ENCODE measurements at regions of chr4 and their contacts with region 1.

Region 1: DNA sequence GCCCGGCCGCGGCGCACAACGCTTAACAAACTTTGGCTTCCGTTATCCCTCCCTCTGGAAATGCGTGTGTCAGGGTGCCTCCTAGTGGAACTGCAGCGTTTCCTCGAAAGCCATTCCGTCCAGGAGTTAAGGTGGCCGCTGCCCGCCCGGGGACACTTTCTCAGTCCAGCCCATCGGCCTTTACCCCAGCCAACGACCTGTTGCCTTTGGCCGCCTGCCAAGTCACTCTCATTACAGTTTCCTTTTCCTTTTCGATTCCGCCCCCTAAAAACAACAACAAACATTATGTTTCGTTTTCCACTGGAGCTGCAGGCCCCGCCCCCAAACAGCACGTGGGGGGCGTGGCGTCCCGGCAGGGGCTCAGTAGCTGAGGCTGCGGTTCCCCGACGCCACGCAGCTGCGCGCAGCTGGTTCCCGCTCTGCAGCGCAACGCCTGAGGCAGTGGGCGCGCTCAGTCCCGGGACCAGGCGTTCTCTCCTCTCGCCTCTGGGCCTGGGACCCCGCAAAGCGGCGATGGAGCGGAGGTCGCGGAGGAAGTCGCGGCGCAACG is at the start of gene HERC5:
- DNase-seq: peak; percentile 93 to 95 (median 95)
- ATAC-seq: peak; percentile 94 to 97 (median 96)
- H3K4me3 ChIP-seq: peak within 1 kb of the TSS; percentile 52 to 92 (median 73)
- H3K27ac ChIP-seq: peak within 1 kb of the TSS; percentile 33 to 85 (median 72)
- H3K4me1 ChIP-seq: peaks cover 0 to 25% (median 5%) of the 10 kb centered on the region in 12 donors
- H3K27me3 ChIP-seq: no peaks in the 10 kb centered on the region
- CTCF ChIP-seq: peak; percentile 41 to 88 (median 72)
- POLR2A ChIP-seq: no peak
- total RNA-seq, gene HERC5: 0.88 to 5.5 (median 2.3) TPM

Region 2: DNA sequence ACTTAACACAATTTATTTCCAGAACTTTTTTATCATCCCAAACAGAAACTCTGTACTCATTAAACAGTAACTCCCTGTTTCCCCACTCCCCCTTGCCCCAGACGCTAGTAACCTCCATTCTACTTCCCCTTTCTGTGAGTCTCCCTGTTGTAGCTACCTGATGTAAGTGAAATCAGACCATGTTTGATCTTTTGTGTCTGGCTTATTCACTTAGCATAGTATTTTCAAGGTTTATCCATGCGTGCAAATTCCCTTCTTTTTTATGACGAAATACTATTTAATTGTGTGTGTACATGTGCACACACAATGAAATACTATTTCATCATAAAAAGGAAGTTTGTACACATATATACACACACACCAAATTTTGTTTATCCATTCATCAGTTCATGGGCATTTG is 444.2 kb before region 1 on chr4:
- intact Hi-C with region 1: loop called in 1 of 10 experiments (anchors 5 kb)
- DNase-seq: no peak
- ATAC-seq: no peak
- H3K4me3 ChIP-seq: no peak overlapping the region
- H3K27ac ChIP-seq: peak overlapping the region in 1 of 12 donors; percentile 46
- H3K4me1 ChIP-seq: peaks cover 0 to 69% (median 53%) of the 10 kb centered on the region in 12 donors
- H3K27me3 ChIP-seq: no peaks in the 10 kb centered on the region
- CTCF ChIP-seq: no peak
- POLR2A ChIP-seq: no peak

Region 3: DNA sequence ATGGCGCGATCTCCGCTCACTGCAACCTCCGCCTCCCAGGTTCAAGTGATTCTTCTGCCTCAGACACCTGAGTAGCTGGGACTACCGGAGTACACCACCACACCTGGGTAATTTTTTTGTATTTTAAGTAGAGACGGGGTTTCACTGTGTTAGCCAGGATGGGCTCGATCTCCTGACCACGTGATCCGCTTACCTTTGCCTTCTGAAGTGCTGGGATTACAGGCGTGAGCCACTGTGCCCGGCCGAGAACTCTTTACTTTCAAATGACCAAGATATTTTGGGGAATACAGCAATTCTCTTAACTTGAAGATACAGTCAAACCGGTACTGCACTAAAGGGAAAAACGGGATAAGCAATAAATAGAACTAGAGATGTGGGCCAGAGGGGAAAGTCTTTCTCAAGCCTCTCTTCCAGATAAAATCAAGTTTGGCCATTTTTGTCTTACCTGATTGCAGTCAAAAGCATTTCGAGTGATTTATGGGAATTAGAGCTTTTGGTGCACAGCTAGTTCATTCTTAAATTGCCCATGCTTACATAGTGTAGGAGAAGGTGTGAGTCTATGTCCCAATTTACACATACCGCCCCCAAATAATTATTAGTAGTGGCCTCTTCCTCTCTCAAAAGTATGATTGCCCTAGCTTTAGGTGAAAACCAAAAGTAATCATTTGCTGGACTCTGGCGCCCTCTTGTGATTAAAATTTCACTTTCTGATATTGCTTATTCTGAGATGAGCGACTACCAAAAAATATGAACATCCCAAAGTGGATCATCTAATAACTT is 245.2 kb before region 1 on chr4:
- intact Hi-C with region 1: loop called in 3 of 10 experiments (anchors 5 kb)
- DNase-seq: peak in 2 of 5 donors; percentile 29 to 33
- ATAC-seq: peak in 3 of 4 donors; percentile 55 to 63 (median 62)
- H3K4me3 ChIP-seq: no peak overlapping the region
- H3K27ac ChIP-seq: no peak overlapping the region
- H3K4me1 ChIP-seq: peaks cover 0 to 3% (median 0%) of the 10 kb centered on the region in 12 donors
- H3K27me3 ChIP-seq: no peaks in the 10 kb centered on the region
- CTCF ChIP-seq: peak; percentile 62 to 86 (median 74)
- POLR2A ChIP-seq: no peak

Region 4: DNA sequence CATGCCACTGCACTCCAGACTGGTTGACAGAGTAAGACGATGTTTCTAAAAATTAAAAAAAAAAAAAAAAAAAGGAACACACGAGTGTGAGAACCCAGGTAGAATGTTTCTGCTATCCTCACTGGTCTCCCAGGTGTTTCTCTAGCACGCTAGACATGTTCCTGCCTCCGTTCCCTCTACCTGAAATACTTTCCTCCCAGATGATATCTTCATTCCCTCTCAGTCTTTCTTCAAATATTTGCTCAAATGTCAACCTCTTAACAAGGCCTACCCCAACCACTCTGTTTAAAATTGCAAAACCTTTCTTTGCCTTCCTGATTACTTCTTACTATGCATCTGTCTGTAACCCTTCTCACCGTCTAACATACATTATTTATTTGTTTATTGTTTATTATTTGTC is 238.9 kb before region 1 on chr4:
- intact Hi-C with region 1: loop called (anchors 2 to 5 kb)
- DNase-seq: no peak
- ATAC-seq: no peak
- H3K4me3 ChIP-seq: no peak overlapping the region
- H3K27ac ChIP-seq: no peak overlapping the region
- H3K4me1 ChIP-seq: peaks cover 0 to 4% (median 0%) of the 10 kb centered on the region in 12 donors
- H3K27me3 ChIP-seq: no peaks in the 10 kb centered on the region
- CTCF ChIP-seq: no peak
- POLR2A ChIP-seq: no peak

Region 5: GRCh38 chr4:88225232-88226105 is 231.4 kb before region 1 on chr4:
- intact Hi-C with region 1: loop called in 3 of 10 experiments (anchors 2 to 5 kb)
- DNase-seq: no peak
- ATAC-seq: peak in 3 of 4 donors; percentile 37 to 51 (median 50)
- H3K4me3 ChIP-seq: no peak overlapping the region
- H3K27ac ChIP-seq: peak overlapping the region in 2 of 12 donors; percentile 26 to 35
- H3K4me1 ChIP-seq: peaks cover 0 to 20% (median 5%) of the 10 kb centered on the region in 12 donors
- H3K27me3 ChIP-seq: no peaks in the 10 kb centered on the region
- CTCF ChIP-seq: no peak
- POLR2A ChIP-seq: no peak

Region 6: DNA sequence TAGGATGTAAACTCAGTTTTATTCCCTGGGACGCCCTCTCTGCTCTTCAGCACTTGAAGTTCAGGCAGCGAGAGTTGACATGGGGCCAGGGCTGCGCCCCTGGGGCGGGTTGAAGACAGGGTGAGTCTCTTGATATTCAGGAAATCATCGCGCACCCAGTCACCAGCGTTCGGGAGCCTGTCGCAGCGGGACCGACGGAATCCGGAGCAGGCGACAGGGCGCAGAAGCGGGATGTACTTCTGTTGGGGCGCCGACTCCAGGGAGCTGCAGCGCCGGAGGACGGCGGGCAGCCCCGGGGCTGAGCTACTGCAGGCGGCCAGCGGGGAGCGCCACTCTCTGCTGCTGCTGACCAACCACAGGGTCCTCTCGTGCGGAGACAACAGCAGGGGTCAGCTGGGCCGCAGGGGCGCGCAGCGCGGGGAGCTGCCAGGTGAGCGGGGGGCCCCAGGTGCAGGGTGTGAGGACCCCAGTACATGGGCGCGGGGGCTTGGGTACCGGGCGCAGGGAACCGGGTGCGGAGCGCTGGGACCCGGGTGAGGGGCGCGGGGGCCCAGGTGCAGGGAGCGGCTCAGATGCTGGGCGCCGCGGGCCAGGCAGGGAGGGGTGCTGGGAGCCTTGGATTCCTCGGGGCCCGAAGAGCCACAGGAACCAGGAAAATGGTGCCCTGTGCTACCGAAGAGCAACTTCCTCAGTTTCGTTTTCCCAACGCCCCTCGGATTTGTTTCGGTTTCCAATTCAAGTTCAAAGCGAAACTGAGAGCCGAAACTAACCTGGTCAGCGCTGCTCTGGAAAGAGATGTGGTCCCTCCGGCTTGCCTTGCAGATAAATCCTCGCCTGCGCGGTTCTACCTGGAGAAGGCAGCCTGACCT is 77.9 kb before region 1 on chr4 and contains the start of gene HERC6:
- intact Hi-C with region 1: loop called in 8 of 10 experiments (anchors 1 to 10 kb)
- DNase-seq: peak; percentile 81 to 89 (median 83)
- ATAC-seq: peak; percentile 91 to 98 (median 97)
- H3K4me3 ChIP-seq: peak within 1 kb of the TSS; percentile 46 to 100 (median 90)
- H3K27ac ChIP-seq: peak within 1 kb of the TSS; percentile 91 to 100 (median 97)
- H3K4me1 ChIP-seq: peaks cover 0 to 17% (median 0%) of the 10 kb centered on the region in 12 donors
- H3K27me3 ChIP-seq: no peaks in the 10 kb centered on the region
- CTCF ChIP-seq: peak; percentile 53 to 89 (median 70)
- POLR2A ChIP-seq: no peak
- total RNA-seq, gene HERC6: 6.1 to 22.0 (median 15.6) TPM

Region 7: DNA sequence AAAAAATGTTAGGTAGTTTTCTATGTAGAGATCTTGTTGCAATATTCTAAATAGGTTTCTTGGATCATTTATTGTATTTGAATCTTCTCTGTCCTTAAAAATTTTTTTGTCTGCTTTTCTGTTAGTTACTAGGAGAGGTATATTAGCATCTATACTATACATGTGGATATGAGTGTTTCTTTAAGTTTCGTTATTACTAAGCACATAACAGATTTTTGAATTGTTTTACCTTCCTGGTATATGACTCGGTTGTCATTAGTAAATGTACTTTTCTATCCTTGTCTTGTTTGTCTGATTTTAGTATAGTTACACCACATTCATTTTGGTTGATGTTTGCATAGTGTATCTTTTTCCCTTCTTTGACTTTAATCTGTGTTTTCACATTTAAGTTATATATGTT is 46.5 kb after region 1 on chr4:
- intact Hi-C with region 1: no loop called
- DNase-seq: no peak
- ATAC-seq: no peak
- H3K4me3 ChIP-seq: no peak overlapping the region
- H3K27ac ChIP-seq: no peak overlapping the region
- H3K4me1 ChIP-seq: no peaks in the 10 kb centered on the region
- H3K27me3 ChIP-seq: no peaks in the 10 kb centered on the region
- CTCF ChIP-seq: no peak
- POLR2A ChIP-seq: no peak

Region 8: DNA sequence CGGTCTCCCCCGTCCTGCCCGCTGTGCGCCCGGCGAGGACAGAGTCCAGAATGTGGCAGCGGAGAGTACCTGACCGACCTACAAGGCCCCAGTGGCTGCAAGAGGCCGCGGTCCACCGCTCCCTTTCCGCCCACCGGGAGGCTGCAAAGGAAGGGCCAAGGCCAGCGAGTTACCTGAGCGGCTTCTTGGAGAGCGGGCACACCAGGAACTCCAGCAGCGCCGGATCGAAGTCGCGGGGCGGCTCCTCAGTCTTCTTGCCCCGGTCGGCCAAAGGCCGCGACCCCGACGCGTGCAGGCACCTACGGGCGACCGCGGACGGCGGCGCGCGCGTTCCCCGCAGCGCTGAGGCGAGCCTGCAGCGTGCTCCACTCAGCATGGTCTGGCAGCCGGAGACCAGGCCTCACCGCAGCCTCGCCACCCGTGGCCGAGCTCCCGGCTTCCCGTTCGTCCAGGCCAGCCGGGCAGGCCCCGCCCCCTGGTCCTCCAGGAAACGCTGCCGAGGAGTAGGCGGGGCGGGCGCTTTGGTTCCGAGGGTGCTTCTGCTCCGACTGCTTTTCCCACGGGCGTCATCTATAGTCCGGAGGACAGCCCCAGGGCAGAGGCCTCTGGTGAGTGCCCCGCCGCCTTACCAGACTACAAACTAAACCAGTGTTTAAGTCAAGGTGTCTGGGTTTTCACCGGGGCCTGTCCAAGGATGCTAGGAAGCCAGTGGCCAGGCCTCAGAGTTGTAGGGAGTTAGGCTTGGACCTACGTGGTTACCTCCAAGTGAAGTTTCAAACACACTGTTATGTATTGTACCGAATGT is 66.7 kb after region 1 on chr4 and contains the start of gene PYURF:
- intact Hi-C with region 1: loop called in 5 of 10 experiments (anchors 5 to 10 kb)
- DNase-seq: peak; percentile 94 to 98 (median 97)
- ATAC-seq: peak; percentile 96 to 98 (median 98)
- H3K4me3 ChIP-seq: peak within 1 kb of the TSS; percentile 66 to 96 (median 90)
- H3K27ac ChIP-seq: peak within 1 kb of the TSS; percentile 60 to 94 (median 86)
- H3K4me1 ChIP-seq: peaks cover 0 to 45% (median 19%) of the 10 kb centered on the region in 12 donors
- H3K27me3 ChIP-seq: no peaks in the 10 kb centered on the region
- CTCF ChIP-seq: peak in 1 of 12 donors; percentile 5
- POLR2A ChIP-seq: peak; percentile 4 to 87
- total RNA-seq, gene PYURF: 46.3 to 63.6 (median 54.2) TPM

Measured in heart left ventricle (tissue), 16 donors.